Naive thymus-derived CD8-positive, alpha-beta T cell (primary cell): ENCODE measurements at regions of chr15 and their contacts with region 1.

Region 1: GRCh38 chr15:28947221-28947674 is 61.5 kb downstream of the APBA2 start:
- DNase-seq: no peak
- ATAC-seq: no peak
- H3K4me3 Mint-ChIP-seq: peak overlapping the region; percentile 22 to 91 (median 86)
- H3K27ac Mint-ChIP-seq: peak overlapping the region; percentile 85 to 100 (median 97)
- H3K4me1 Mint-ChIP-seq: peaks cover 46 to 91% (median 85%) of the 10 kb centered on the region in 4 donors
- H3K27me3 Mint-ChIP-seq: peaks cover 0 to 1% (median 0%) of the 10 kb centered on the region in 5 donors

Region 2: GRCh38 chr15:28921919-28922706 is 25.1 kb before region 1 on chr15:
- POLR2A ChIA-PET with region 1: interaction called, 17 read pairs
- DNase-seq: peak in 1 of 10 donors; percentile 49
- ATAC-seq: no peak
- H3K4me3 Mint-ChIP-seq: peak overlapping the region in 9 of 10 donors; percentile 30 to 90 (median 77)
- H3K27ac Mint-ChIP-seq: peak overlapping the region in 9 of 10 donors; percentile 78 to 93 (median 91)
- H3K4me1 Mint-ChIP-seq: peaks cover 49 to 89% (median 84%) of the 10 kb centered on the region in 4 donors
- H3K27me3 Mint-ChIP-seq: no peaks in the 10 kb centered on the region